Dendritic cell treated with granulocyte-macrophage colony-stimulating factor and Interleukin-4, amounts not matched to agents 40 ng/mL and 50 ng/mL, for 4 days (primary cell): ENCODE measurements at regions of chr3 and their contacts with region 1.

Region 1: DNA sequence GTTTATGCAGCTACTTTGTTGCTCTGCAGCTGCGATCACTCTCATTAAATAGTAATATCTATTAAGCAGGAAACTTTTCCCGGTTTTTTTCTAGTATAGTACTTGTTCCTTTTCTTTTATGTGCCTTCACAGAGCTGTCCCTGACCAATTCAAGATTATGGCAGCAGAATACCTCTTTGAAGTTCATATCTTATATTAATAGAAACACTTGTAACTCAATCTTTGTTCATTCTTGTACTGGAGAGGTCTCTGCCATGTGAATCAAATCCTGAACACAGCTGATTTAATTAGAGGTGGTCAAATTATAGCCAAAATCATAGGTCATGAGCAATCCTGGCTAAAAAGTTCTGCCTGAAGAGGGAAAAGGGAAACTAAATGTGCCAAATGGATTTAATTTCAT is 399.0 kb upstream of the ARHGEF26 start:
- H3K4me3 Mint-ChIP-seq: no peak overlapping the region
- H3K27ac Mint-ChIP-seq: no peak overlapping the region
- H3K4me1 Mint-ChIP-seq: no peaks in the 10 kb centered on the region
- H3K27me3 Mint-ChIP-seq: no peaks in the 10 kb centered on the region

Region 2: GRCh38 chr3:153628591-153628990 is 93.6 kb before region 1 on chr3:
- intact Hi-C with region 1: loop called (anchors 5 kb)
- H3K4me3 Mint-ChIP-seq: no peak overlapping the region
- H3K27ac Mint-ChIP-seq: no peak overlapping the region
- H3K4me1 Mint-ChIP-seq: peaks cover 5% of the 10 kb centered on the region
- H3K27me3 Mint-ChIP-seq: no peaks in the 10 kb centered on the region

Region 3: DNA sequence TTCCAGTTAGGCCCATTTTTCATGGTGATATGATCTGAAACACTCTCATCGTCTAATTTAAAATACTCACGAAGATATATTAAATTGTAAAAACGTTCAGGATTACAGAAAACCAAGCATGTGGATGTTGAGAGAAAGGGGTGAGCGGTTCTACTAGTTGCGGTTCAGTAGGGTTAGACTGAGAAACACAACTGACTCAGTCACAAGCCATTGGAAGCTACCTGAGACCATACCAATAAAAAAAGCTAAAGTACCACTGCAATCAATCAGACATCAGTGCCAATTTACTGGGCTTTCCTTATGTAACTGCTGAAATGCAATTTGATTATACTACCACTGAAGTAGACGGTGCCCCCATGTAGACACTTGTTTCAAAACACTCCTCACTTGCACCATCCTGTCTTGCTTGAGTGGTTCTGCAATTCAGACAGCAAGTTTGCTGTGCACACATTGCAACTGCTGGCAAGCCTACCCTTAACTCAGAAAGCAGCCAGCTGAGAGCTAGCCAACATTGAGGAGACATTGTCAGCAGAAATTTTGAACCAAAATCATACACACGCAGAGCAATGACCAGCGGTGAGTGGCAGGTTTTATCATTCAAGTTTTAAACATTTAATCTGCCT is 30.4 kb after region 1 on chr3:
- intact Hi-C with region 1: no loop called
- H3K4me3 Mint-ChIP-seq: no peak overlapping the region
- H3K27ac Mint-ChIP-seq: no peak overlapping the region
- H3K4me1 Mint-ChIP-seq: no peaks in the 10 kb centered on the region
- H3K27me3 Mint-ChIP-seq: peaks cover 2% of the 10 kb centered on the region